ENCODE measurements at regions of chr3 and their contacts with region 1.

Region 1: GRCh38 chr3:149267565-149267964 is 45.9 kb upstream of the CP start:
- ATAC-seq: no peak
- H3K4me3 ChIP-seq: no peak overlapping the region
- H3K27ac ChIP-seq: no peak overlapping the region
- H3K4me1 ChIP-seq: no peaks in the 10 kb centered on the region

Region 2: GRCh38 chr3:148054999-148055398 is 1212.6 kb before region 1 on chr3:
- in situ Hi-C with region 1: no loop called
- ATAC-seq: no peak
- H3K4me3 ChIP-seq: no peak overlapping the region
- H3K27ac ChIP-seq: no peak overlapping the region
- H3K4me1 ChIP-seq: no peaks in the 10 kb centered on the region

Region 3: GRCh38 chr3:148902031-148902791 is 365.4 kb before region 1 on chr3:
- in situ Hi-C with region 1: no loop called
- ATAC-seq: peak in 6 of 8 experiments; percentile 28 to 72 (median 37)
- H3K4me3 ChIP-seq: no peak overlapping the region
- H3K27ac ChIP-seq: no peak overlapping the region
- H3K4me1 ChIP-seq: peaks cover 0 to 15% of the 10 kb centered on the region in 2 donors

Region 4: DNA sequence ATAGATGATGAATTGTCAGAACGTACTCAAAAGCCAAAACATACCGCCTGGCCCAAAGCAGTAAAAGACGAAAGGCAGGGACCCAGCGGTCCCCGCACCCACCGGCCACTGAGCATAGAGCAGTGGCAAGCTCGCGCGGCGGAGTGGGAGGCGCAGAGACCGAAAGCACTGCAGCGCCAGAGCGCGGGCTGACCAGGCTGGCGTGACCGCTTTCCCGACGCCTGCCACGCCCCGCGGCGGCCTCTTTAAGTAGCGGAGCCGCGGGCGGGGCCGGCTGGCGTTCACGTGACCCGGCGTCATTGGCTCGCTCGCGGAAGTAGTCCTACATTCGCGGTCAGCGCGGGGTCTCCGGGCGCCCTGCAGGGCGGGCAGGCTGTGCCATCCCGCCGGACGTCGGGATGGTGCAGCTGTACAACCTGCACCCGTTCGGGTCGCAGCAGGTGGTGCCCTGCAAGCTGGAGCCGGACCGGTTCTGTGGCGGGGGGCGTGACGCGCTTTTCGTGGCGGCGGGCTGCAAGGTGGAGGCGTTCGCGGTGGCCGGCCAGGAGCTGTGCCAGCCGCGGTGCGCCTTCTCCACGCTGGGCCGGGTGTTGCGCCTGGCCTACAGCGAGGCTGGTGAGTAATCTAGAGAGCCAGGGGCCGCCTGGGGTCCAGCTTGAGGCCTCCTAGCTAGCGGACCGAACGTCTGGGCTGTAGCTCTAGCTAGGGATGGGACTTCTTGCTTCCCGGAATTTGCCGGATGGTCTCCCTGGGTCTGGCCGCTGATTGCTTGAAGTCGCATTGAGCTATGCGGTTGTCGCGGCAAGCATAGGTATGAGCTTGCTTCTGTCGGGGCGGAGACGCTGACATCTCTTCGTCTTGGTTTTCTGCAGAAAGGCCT is 138.0 kb before region 1 on chr3 and contains the start of gene HPS3:
- in situ Hi-C with region 1: loop called in 5 of 9 experiments (anchors 5 to 25 kb)
- ATAC-seq: peak; percentile 90 to 96 (median 94)
- H3K4me3 ChIP-seq: peak within 1 kb of the TSS; percentile 54 to 86 (median 63)
- H3K27ac ChIP-seq: peak within 1 kb of the TSS; percentile 4 to 5
- H3K4me1 ChIP-seq: peaks cover 11 to 24% of the 10 kb centered on the region in 2 donors
- total RNA-seq, gene HPS3: 9.3 to 17.6 (median 10.8) TPM

Region 5: DNA sequence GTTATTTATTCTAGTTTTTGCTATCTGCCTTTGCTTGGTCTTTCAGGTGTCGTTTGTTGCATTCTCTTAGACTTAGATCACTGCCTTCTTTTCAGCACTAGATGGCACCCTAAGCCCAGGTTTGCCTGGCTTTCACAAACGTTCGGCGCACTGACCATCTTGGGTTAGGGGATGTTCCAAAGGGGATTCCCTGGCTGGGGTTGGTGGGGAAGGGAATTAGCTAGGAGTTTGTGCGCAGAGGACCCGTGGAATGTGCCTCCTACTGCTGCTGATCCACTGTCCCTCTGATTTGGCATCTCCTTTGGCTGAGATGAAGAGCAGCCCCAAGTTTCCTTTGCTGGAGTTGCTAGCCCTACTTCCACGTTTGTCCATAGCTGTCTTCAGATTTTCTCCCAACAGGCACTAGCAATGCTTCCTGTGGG is 669.3 kb after region 1 on chr3:
- in situ Hi-C with region 1: no loop called
- ATAC-seq: peak in 3 of 8 experiments; percentile 61 to 72 (median 72)
- H3K4me3 ChIP-seq: no peak overlapping the region
- H3K27ac ChIP-seq: no peak overlapping the region
- H3K4me1 ChIP-seq: no peaks in the 10 kb centered on the region